ENCODE measurements at regions of chr10 and their contacts with region 1.

Region 1: DNA sequence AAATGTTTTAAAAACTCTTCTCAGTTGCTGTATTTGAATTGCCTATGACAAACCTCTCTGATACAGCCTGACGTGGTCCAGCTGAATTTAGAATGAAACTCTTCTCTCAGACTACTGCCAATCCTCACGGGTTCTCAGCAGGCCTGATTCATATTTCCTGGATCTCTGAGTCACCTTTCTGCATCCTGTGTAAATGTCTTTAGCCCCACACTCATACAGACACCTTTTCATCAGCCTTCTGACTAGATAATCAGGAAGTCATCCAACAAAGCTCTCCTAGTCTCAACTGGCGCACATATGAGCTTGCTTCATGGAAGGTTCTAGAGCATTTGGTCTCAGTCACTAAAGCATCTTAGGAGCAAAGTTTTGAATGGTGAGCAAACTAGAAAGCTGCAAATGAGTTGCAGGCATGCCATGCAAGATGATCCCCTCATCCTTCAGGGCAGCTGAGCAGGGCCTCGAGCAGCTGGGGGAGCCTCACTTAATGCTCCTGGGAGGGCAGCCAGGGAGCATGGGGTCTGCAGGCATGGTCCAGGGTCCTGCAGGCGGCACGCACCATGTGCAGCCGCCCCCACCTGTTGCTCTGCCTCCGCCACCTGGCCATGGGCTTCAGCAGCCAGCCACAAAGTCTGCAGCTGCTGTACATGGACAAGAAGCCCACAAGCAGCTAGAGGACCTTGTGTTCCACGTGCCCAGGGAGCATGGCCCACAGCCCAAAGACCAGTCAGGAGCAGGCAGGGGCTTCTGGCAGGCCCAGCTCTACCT is 182.8 kb downstream of the ARHGAP12 start:
- DNase-seq: no peak
- ATAC-seq: peak in 6 of 8 donors; percentile 23 to 78 (median 52)
- H3K4me3 ChIP-seq: no peak overlapping the region
- H3K27ac ChIP-seq: peak overlapping the region in 5 of 10 donors; percentile 0 to 80 (median 52)
- H3K4me1 ChIP-seq: peaks cover 12 to 34% (median 19%) of the 10 kb centered on the region in 9 donors
- H3K27me3 ChIP-seq: no peaks in the 10 kb centered on the region
- CTCF ChIP-seq: no peak

Region 2: DNA sequence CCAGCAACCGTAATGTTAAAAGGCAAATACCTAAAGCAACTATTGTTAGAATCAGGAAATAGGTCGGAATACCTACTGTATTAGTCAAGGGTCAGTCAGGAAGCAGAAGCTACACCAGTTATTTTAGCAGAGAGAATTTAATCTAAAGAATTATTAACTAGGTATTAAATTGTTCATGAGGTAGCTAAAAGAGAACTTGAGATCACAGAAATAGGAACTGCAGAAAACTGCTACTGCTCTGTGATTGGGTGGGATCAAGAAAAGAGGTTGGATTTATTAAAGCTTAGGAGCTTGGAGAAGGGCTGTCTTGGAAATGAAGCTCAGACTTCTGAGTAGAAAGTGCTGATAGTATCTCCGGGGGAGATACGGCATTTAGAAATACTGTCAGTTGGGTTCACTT is 694.1 kb before region 1 on chr10:
- intact Hi-C with region 1: loop called in 1 of 10 experiments (anchors 5 kb)
- DNase-seq: no peak
- ATAC-seq: no peak
- H3K4me3 ChIP-seq: no peak overlapping the region
- H3K27ac ChIP-seq: peak overlapping the region in 3 of 10 donors; percentile 0 to 61 (median 36)
- H3K4me1 ChIP-seq: no peaks in the 10 kb centered on the region
- H3K27me3 ChIP-seq: no peaks in the 10 kb centered on the region
- CTCF ChIP-seq: no peak

Region 3: DNA sequence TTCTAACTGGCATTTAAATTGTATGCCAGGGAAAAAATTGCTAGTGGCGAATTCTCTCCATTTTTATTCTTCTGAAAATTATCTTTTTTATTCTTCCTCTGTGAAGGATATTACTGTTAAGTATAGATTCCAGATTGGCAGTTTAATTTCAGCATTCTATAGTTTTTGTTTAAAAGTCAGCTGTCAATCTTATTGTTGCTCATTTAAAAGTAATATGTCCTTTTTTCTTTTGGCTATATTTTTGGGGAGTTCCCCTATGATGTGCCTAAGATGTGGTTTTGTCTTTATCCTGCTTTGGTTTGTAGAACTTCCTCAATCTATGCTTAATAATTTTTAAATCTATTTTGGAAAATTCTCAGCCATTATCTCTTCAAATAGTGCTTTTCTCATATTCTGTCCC is 47.0 kb after region 1 on chr10:
- intact Hi-C with region 1: no loop called
- DNase-seq: no peak
- ATAC-seq: no peak
- H3K4me3 ChIP-seq: no peak overlapping the region
- H3K27ac ChIP-seq: no peak overlapping the region
- H3K4me1 ChIP-seq: no peaks in the 10 kb centered on the region
- H3K27me3 ChIP-seq: no peaks in the 10 kb centered on the region
- CTCF ChIP-seq: no peak